ENCODE measurements at regions of chr18 and their contacts with region 1.

Region 1: DNA sequence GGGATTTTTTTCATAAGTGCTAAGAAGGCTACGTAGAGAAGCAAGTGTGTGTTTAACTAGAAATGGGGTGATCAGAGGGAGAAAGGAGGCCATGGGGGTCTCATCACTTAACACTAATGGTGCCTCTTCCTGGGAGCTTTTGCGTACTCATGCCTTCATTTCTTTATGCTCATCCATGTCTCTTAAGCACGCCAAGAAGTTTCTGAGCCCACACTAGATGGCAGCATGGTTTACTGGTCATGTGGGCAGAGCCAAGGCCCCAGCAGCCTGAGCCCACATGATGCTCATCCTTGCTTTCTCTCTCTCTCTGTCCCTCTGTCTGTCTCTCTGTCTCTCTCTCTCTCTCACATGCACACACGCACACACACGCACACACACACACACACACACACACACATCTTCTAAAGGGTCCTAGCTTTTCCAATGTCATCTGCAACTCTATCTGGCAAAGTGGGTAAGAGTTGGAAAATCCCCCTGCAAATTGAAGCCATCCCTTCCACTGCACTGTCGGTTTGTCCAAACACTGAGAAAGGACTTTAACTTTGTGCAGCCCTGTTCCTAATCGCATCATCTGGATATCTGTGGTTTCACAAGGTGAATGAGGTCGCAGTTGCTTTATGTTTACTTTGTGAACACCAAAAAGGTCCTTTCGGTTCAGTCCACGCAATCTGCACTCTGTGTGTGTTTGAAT is 137.1 kb upstream of the CCDC68 start:
- DNase-seq: peak; percentile 62
- H3K4me3 ChIP-seq: no peak overlapping the region
- H3K27ac ChIP-seq: no peak overlapping the region
- H3K4me1 ChIP-seq: peaks cover 13% of the 10 kb centered on the region
- H3K27me3 ChIP-seq: no peaks in the 10 kb centered on the region
- CTCF ChIP-seq: peak; percentile 35 to 70

Region 2: DNA sequence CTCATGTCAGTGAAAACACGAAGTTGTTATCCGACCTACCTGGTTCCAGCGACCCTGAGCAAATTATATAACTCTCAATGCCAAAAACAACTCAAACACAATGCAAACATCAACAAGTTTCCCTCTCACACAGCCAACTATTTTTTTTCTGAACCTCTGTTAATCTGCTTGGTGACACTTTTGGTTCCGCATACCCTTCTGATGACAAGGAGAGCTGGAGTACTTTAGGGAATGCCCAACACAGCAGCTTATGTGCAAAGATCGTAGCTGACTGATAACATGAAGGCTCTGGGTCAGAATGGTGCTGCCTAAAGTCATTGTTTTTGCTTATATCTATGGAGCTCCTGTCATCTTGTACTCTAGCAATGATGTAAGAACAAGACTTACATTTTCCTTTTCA is 64.4 kb before region 1 on chr18:
- CTCF ChIA-PET with region 1: no interaction called
- dilution Hi-C with region 1: no loop called
- in situ Hi-C with region 1: no loop called
- intact Hi-C with region 1: no loop called
- DNase-seq: no peak
- H3K4me3 ChIP-seq: no peak overlapping the region
- H3K27ac ChIP-seq: no peak overlapping the region
- H3K4me1 ChIP-seq: no peaks in the 10 kb centered on the region
- H3K27me3 ChIP-seq: peaks cover 3% of the 10 kb centered on the region
- CTCF ChIP-seq: no peak

Region 3: GRCh38 chr18:55069497-55069896 is 26.9 kb before region 1 on chr18:
- CTCF ChIA-PET with region 1: no interaction called
- dilution Hi-C with region 1: no loop called
- in situ Hi-C with region 1: no loop called
- intact Hi-C with region 1: no loop called
- DNase-seq: no peak
- H3K4me3 ChIP-seq: no peak overlapping the region
- H3K27ac ChIP-seq: no peak overlapping the region
- H3K4me1 ChIP-seq: no peaks in the 10 kb centered on the region
- H3K27me3 ChIP-seq: no peaks in the 10 kb centered on the region
- CTCF ChIP-seq: no peak

Region 4: DNA sequence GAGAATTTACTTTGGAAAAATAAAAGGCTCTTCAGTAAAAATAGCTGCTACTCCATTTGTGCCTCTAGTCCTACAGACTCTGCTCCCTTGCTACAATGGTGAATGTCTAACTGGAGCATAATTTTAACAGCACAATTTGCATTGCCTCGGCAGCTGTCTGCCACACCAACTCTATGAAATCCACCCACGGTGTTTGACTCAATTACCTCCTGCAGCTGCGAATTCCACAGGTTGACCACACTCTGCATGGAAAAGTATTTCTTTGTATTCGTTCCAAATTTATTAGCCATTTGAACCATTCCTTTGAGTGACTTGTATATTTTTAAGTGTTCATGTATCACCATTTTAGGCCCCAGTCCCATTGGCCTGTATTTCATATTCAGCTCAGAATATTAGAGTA is 44.9 kb after region 1 on chr18:
- CTCF ChIA-PET with region 1: no interaction called
- dilution Hi-C with region 1: no loop called
- in situ Hi-C with region 1: no loop called
- intact Hi-C with region 1: loop called (anchors 5 kb)
- DNase-seq: peak; percentile 58
- H3K4me3 ChIP-seq: no peak overlapping the region
- H3K27ac ChIP-seq: no peak overlapping the region
- H3K4me1 ChIP-seq: peaks cover 12% of the 10 kb centered on the region
- H3K27me3 ChIP-seq: no peaks in the 10 kb centered on the region
- CTCF ChIP-seq: no peak

Region 5: GRCh38 chr18:55214969-55215368 is 118.6 kb after region 1 on chr18:
- CTCF ChIA-PET with region 1: no interaction called
- dilution Hi-C with region 1: no loop called
- in situ Hi-C with region 1: loop called in 1 of 2 experiments (anchors 10 kb)
- intact Hi-C with region 1: no loop called
- DNase-seq: no peak
- H3K4me3 ChIP-seq: no peak overlapping the region
- H3K27ac ChIP-seq: no peak overlapping the region
- H3K4me1 ChIP-seq: no peaks in the 10 kb centered on the region
- H3K27me3 ChIP-seq: no peaks in the 10 kb centered on the region
- CTCF ChIP-seq: no peak

Region 6: DNA sequence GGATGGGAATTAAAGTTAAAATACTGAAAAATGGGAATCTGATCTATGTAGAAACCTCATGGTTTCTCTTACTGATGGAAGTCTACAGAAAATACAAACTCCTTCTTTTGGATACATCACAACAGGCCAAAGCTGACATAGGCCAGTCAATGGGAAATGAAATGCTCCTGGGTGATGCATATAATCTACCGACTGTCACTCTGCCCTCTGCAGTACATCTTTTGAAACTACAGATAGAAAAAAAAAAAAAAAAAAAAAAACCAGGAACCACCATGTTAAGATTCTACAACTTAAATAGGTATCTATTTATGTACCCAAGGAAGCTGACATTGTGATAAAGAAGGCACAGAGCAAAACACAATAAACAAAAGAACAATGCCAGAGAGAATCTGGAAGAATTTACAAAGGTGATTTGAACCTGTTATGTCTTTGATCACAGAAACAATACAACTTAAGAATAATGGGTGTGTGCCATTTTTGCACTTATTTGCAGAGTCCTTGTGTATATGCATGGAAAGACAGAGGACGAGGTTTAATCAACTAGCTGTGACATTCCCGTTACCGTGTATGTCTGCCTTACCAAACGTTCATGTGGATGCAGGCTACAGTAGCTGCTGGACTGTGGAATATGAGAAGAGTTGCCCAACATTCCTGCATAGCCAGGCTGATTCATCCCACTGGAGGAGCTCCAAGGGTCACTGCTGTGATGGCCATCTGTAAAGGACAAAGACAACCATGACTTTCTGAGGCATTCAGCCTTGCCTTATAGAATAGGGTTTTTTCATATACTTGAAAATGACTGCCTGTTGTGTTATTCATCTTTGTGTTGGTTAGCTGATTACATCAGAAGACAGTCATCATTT is 178.9 kb after region 1 on chr18:
- CTCF ChIA-PET with region 1: no interaction called
- dilution Hi-C with region 1: no loop called
- in situ Hi-C with region 1: no loop called
- intact Hi-C with region 1: loop called (anchors 1 kb)
- DNase-seq: peak; percentile 31
- H3K4me3 ChIP-seq: no peak overlapping the region
- H3K27ac ChIP-seq: no peak overlapping the region
- H3K4me1 ChIP-seq: peaks cover 13% of the 10 kb centered on the region
- H3K27me3 ChIP-seq: no peaks in the 10 kb centered on the region
- CTCF ChIP-seq: peak; percentile 11 to 25

Region 7: GRCh38 chr18:55322178-55322735 is 225.9 kb after region 1 on chr18:
- CTCF ChIA-PET with region 1: no interaction called
- dilution Hi-C with region 1: no loop called
- in situ Hi-C with region 1: no loop called
- intact Hi-C with region 1: loop called (anchors 5 kb)
- DNase-seq: peak; percentile 78
- H3K4me3 ChIP-seq: peak overlapping the region; percentile 57 to 90 (median 70)
- H3K27ac ChIP-seq: peak overlapping the region; percentile 45
- H3K4me1 ChIP-seq: peaks cover 24% of the 10 kb centered on the region
- H3K27me3 ChIP-seq: no peaks in the 10 kb centered on the region
- CTCF ChIP-seq: no peak

Measured in mammary epithelial cell (primary cell).